Heart right ventricle (tissue), 16 donors: ENCODE measurements at regions of chr13 and their contacts with region 1.

Region 1: GRCh38 chr13:75803164-75803611 is 167.1 kb downstream of the LMO7 start:
- DNase-seq: no peak
- ATAC-seq: peak in 7 of 8 donors; percentile 8 to 51 (median 32)
- H3K4me3 ChIP-seq: no peak overlapping the region
- H3K27ac ChIP-seq: peak overlapping the region; percentile 53 to 94 (median 88)
- H3K4me1 ChIP-seq: peaks cover 0 to 46% (median 15%) of the 10 kb centered on the region in 9 donors
- H3K27me3 ChIP-seq: no peaks in the 10 kb centered on the region
- CTCF ChIP-seq: no peak

Region 2: GRCh38 chr13:75696746-75697145 is 106.4 kb before region 1 on chr13:
- intact Hi-C with region 1: loop called in 5 of 10 experiments (anchors 2 to 10 kb)
- DNase-seq: no peak
- ATAC-seq: no peak
- H3K4me3 ChIP-seq: no peak overlapping the region
- H3K27ac ChIP-seq: no peak overlapping the region
- H3K4me1 ChIP-seq: peaks cover 0 to 4% (median 0%) of the 10 kb centered on the region in 9 donors
- H3K27me3 ChIP-seq: no peaks in the 10 kb centered on the region
- CTCF ChIP-seq: no peak

Region 3: GRCh38 chr13:75760131-75761021 is 42.8 kb before region 1 on chr13:
- intact Hi-C with region 1: loop called in 7 of 10 experiments (anchors 5 kb)
- DNase-seq: peak in 1 of 2 donors; percentile 10
- ATAC-seq: peak; percentile 48 to 86 (median 79)
- H3K4me3 ChIP-seq: peak overlapping the region; percentile 7 to 49 (median 37)
- H3K27ac ChIP-seq: peak overlapping the region; percentile 0 to 79 (median 67)
- H3K4me1 ChIP-seq: peaks cover 0 to 35% (median 12%) of the 10 kb centered on the region in 9 donors
- H3K27me3 ChIP-seq: no peaks in the 10 kb centered on the region
- CTCF ChIP-seq: peak in 4 of 9 donors; percentile 5 to 38 (median 36)